ENCODE measurements at regions of chr2 and their contacts with region 1.

Region 1: DNA sequence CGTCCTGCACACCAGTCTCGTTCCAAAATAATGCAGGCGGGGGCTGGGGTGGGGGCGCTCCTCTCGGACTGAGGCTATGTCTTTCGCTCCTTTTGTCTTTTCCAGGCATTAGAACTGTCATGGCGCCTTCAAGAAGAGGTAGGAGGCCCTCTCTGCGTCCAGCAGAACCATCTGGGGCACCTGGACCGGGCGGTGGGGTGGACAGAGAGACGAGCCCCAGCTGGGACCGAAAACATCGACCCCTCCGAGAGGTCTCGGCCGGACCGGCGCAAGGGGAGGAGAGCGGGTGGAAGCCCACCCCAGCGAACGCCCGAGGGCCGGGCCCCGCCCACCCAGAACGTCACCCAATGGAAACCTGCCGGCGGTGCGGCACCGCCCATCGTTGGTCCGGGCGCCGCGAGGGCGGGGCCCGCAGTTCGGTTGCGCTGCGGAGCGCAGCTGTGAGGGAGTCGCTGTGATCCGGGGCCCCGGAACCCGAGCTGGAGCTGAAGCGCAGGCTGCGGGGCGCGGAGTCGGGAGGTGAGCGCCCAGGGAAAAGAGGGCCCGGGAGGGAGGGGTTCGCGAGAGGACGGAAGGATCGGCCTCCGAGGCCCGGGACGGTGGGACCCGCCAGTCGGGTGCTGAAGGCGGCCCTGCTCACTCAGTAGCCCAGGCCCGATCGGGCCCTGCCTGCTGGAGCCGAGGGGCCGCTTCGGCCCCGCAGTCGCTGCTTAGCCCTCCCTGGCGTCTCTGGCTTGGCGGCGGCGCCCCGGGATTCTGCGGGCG is at the start of gene NRBP1:
- DNase-seq: peak; percentile 94
- H3K4me3 Mint-ChIP-seq: peak within 1 kb of the TSS; percentile 98
- H3K27ac Mint-ChIP-seq: peak within 1 kb of the TSS; percentile 94
- H3K4me1 Mint-ChIP-seq: peaks cover 31% of the 10 kb centered on the region
- H3K27me3 Mint-ChIP-seq: no peaks in the 10 kb centered on the region
- total RNA-seq, gene NRBP1: 60.0 to 63.3 TPM

Region 2: GRCh38 chr2:27211829-27212627 is 216.4 kb before region 1 on chr2 and contains the starts of genes ATRAID and SLC5A6:
- CTCF ChIA-PET with region 1: no interaction called
- intact Hi-C with region 1: loop called (anchors 1 kb)
- DNase-seq: peak; percentile 88
- H3K4me3 Mint-ChIP-seq: peak within 1 kb of the TSS; percentile 98
- H3K27ac Mint-ChIP-seq: peak within 1 kb of the TSS; percentile 99
- H3K4me1 Mint-ChIP-seq: peaks cover 29% of the 10 kb centered on the region
- H3K27me3 Mint-ChIP-seq: no peaks in the 10 kb centered on the region
- total RNA-seq, gene ATRAID: 80.5 to 80.8 TPM
- total RNA-seq, gene SLC5A6: 22.6 to 24.8 TPM

Region 3: GRCh38 chr2:27322766-27323595 is 105.4 kb before region 1 on chr2 and contains the start of gene MPV17:
- CTCF ChIA-PET with region 1: interaction called, 4 read pairs
- intact Hi-C with region 1: loop called (anchors 2 kb)
- DNase-seq: peak; percentile 95
- H3K4me3 Mint-ChIP-seq: peak within 1 kb of the TSS; percentile 84
- H3K27ac Mint-ChIP-seq: peak within 1 kb of the TSS; percentile 85
- H3K4me1 Mint-ChIP-seq: peaks cover 14% of the 10 kb centered on the region
- H3K27me3 Mint-ChIP-seq: no peaks in the 10 kb centered on the region
- total RNA-seq, gene MPV17: 80.2 to 82.3 TPM

Region 4: DNA sequence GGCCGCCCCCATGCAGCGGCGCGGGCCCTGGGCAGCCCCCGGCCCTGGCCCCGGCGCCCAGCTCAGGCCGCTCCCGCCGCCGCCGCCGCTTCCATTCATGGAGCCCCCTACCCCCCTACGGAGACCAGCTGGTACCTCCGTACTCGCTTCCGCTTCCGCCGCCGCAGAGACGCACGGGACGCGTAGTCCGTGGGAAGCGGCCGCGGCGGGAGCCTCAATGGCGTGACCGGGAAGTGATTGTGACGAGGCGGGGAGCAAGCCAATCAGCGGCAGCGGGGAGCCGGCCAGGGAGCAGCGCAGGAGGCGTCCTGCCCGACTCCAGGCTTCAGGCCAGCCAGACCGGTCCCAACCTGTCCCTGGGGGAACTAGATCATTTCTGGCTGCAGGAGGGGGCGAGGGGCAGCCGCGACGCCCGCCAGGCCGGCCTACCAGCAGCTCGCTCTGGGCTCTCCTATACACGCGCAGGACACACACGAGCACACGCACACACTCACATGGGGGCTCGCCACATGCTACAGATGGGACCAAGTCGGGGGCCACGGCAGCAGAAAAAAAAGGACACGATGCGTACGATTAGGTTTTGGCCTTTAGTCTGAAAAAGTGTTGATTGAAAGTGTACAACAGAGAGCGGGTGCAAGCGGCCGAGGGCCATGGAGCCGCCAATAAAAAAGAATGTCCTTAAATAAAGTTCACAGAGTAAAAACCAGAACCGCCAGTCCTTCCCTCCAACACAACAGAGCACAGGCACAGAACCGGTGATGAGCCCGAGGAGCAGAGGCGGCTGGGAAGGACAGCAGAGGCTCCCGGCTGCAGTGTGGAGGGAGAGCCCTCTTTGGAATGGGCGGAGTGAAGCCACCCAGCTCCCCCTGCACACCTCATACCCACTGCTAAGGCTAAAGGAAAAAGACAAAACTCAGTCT is 47.5 kb before region 1 on chr2 and contains the start of gene ZNF513:
- CTCF ChIA-PET with region 1: interaction called, 13 read pairs
- intact Hi-C with region 1: loop called (anchors 2 kb)
- DNase-seq: peak; percentile 93
- H3K4me3 Mint-ChIP-seq: peak within 1 kb of the TSS; percentile 79
- H3K27ac Mint-ChIP-seq: peak within 1 kb of the TSS; percentile 86
- H3K4me1 Mint-ChIP-seq: peaks cover 30% of the 10 kb centered on the region
- H3K27me3 Mint-ChIP-seq: no peaks in the 10 kb centered on the region
- total RNA-seq, gene ZNF513: 4.9 to 5.2 TPM

Region 5: DNA sequence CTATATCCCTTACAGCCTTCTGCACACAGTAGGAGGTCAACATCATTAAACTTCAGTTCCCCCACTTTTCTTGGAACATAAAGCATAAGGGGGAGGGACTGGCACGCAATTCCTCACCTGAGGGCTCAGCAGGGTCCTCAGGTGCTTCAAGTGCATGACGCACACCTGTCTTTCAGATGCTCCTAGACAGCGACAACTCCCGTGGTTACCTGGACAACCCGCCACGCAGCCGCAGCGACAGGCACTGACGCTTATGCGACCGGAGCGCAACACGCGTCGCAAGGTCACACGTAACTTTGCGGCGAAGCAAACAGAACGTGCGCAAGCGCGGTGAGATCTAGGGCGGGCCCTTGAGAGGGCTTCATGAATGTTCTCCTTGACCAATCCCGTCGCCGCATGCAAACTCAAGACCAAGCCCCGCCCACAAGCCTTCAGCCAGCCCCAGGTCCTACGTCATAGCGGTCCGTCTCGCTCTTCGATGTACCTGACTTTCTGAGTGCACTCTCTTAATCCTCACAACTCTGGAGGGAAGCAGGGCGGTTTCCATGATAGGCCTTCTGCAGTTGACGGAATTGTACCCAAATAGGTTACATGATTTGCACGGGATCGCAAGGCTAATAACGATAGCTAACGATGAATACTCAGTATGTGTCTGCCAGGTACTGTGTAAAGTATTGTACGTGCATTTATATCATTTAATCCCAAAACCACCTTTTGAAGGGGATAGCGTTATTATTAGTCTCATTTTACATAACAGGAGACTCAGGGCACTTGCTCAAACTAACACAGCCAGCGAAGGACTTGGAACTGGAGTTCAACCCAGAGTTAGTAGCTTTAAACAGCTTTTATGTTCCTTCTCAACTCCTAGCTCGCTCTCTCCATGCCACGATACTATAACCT is 61.4 kb after region 1 on chr2 and contains the start of gene IFT172:
- CTCF ChIA-PET with region 1: no interaction called
- intact Hi-C with region 1: loop called (anchors 1 kb)
- DNase-seq: peak; percentile 100
- H3K4me3 Mint-ChIP-seq: peak within 1 kb of the TSS; percentile 87
- H3K27ac Mint-ChIP-seq: peak within 1 kb of the TSS; percentile 66
- H3K4me1 Mint-ChIP-seq: peaks cover 20% of the 10 kb centered on the region
- H3K27me3 Mint-ChIP-seq: peaks cover 10% of the 10 kb centered on the region
- total RNA-seq, gene IFT172: 9.2 to 12.7 TPM

Region 6: DNA sequence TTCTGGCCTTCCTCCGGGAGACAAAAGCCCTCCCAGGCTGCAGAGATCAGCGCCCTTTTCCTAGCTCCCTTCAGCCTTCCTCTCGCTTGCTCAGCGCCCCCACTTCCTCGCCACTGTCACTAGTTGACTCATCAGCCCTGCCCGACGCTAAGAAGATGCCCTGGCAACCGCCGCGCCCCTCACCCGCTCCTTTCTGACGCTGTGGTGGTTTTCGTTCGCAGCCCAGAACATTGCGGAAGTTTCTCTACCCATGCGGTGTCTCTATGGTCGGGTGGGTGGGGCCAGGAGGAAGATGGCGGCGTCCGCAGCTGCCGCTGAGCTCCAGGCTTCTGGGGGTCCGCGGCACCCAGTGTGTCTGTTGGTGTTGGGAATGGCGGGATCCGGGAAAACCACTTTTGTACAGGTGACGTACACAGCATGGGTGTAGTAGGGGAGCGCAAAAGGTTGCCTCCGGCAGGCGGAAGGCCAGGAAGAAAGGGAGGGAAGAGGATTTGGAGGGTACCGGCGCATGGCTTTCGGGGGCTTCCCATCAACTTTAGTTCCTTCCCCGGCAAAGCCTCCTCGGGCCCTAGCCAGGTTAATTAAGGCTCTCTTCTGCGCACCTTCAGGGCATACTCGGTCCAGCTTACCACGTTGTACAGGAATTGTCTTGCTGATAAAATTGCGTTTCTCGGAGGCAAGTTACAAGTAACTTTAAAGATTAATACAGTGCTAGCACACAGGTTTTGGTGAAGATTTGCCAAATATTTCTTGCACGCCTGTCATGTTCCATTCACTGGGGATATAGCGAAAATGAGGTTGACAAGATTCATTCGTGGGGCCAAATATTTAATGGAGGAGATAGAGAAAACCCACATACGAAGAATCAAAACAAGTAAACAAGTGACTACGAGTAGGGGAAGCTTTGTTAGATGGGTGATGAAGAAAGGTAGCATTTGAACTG is 200.6 kb after region 1 on chr2 and contains the starts of genes CCDC121 and GPN1:
- CTCF ChIA-PET with region 1: no interaction called
- intact Hi-C with region 1: loop called (anchors 2 kb)
- DNase-seq: peak; percentile 98
- H3K4me3 Mint-ChIP-seq: no peak within 1 kb of the TSS
- H3K27ac Mint-ChIP-seq: peak within 1 kb of the TSS; percentile 52
- H3K4me1 Mint-ChIP-seq: peaks cover 13% of the 10 kb centered on the region
- H3K27me3 Mint-ChIP-seq: no peaks in the 10 kb centered on the region
- total RNA-seq, gene CCDC121: 0.17 to 0.30 TPM
- total RNA-seq, gene GPN1: 44.9 to 45.1 TPM

Region 7: DNA sequence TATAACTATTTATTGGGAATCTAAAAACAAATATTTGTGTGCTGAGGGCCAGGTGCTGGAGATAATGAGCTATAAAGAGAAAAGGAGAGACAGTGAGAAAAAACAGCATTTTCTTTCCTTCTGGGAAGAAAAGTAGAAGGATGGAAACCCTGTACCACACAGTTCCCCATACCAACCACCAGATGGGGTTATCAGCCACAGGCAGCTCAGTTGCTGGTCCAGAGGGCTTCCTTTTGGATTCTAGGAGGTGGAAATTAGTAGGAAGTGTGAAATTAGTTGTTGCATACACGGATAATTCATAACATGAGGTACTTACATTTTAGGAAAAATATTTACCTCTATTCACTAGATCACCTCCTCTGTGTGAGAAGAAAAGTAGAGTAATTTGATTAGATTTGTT is 727.2 kb after region 1 on chr2:
- CTCF ChIA-PET with region 1: no interaction called
- intact Hi-C with region 1: no loop called
- DNase-seq: peak; percentile 13
- H3K4me3 Mint-ChIP-seq: no peak overlapping the region
- H3K27ac Mint-ChIP-seq: no peak overlapping the region
- H3K4me1 Mint-ChIP-seq: no peaks in the 10 kb centered on the region
- H3K27me3 Mint-ChIP-seq: no peaks in the 10 kb centered on the region

Region 8: DNA sequence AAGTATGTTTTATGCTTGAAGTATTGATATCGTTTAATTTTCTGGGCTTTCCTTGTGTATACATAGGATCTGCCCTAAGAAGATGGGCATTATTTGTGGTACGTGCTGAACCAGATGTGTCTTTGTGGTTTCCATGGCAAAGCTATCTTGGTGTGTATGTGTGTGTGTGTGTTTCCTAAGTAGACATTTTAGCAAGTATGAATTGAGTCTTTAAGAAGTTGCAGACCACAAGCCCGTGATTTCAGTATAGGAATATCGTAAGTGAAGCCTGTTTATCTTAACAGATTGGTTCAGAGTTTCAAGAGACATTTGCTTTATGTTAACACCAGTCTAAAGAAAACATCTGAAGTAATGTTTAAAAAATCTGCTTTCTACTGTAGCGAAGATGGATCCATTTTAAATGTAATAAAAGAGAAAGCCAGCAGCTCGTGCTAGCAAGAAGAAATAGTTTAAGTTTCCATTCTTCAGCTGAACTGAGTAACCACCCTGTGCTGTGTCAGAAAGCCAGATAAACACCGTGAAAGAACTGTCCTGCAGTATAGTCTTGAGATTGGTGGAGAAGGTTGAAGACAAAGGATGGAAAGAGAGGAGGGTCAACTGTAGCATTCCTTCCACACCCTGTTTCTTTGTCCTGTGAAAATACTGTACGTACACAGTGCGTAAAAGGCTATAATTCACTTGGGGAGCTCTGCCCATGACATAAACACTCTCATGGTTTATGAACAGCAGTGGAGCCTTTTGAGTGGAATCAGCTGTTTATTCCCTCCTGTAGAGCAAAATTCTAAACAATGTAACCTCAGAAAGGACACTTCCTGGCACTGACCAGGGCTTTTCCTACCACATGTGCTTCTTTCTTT is 872.3 kb after region 1 on chr2:
- CTCF ChIA-PET with region 1: no interaction called
- intact Hi-C with region 1: no loop called
- DNase-seq: no peak
- H3K4me3 Mint-ChIP-seq: no peak overlapping the region
- H3K27ac Mint-ChIP-seq: no peak overlapping the region
- H3K4me1 Mint-ChIP-seq: no peaks in the 10 kb centered on the region
- H3K27me3 Mint-ChIP-seq: no peaks in the 10 kb centered on the region